HepG2 (cell line): ENCODE measurements at regions of chr10 and their contacts with region 1.

Region 1: GRCh38 chr10:3239066-3239919 is 66.7 kb upstream of the PITRM1 start:
- DNase-seq: peak; percentile 28
- ATAC-seq: peak; percentile 94
- H3K4me3 ChIP-seq: no peak overlapping the region
- H3K27ac ChIP-seq: no peak overlapping the region
- H3K4me1 ChIP-seq: no peaks in the 10 kb centered on the region
- H3K27me3 ChIP-seq: peaks cover 5 to 66% of the 10 kb centered on the region in 2 experiments
- CTCF ChIP-seq: peak; percentile 94
- EP300 ChIP-seq: no peak
- POLR2A ChIP-seq: no peak
- RAD21 ChIP-seq: peak; percentile 86

Region 2: GRCh38 chr10:3208481-3209406 is 30.5 kb before region 1 on chr10:
- CTCF ChIA-PET with region 1: no interaction called
- POLR2A ChIA-PET with region 1: no interaction called
- in situ Hi-C with region 1: no loop called
- intact Hi-C with region 1: no loop called
- DNase-seq: no peak
- ATAC-seq: no peak
- H3K4me3 ChIP-seq: no peak overlapping the region
- H3K27ac ChIP-seq: no peak overlapping the region
- H3K4me1 ChIP-seq: no peaks in the 10 kb centered on the region
- H3K27me3 ChIP-seq: peaks cover 2 to 35% of the 10 kb centered on the region in 2 experiments; a peak in 3 of 5 replicates
- CTCF ChIP-seq: no peak
- EP300 ChIP-seq: no peak
- POLR2A ChIP-seq: no peak
- RAD21 ChIP-seq: no peak

Region 3: GRCh38 chr10:3525832-3526449 is 286.6 kb after region 1 on chr10:
- CTCF ChIA-PET with region 1: no interaction called
- POLR2A ChIA-PET with region 1: no interaction called
- in situ Hi-C with region 1: no loop called
- intact Hi-C with region 1: no loop called
- DNase-seq: peak; percentile 13
- ATAC-seq: peak; percentile 50; the same call in 2 of the 3 replicates
- H3K4me3 ChIP-seq: no peak overlapping the region
- H3K27ac ChIP-seq: no peak overlapping the region
- H3K4me1 ChIP-seq: no peaks in the 10 kb centered on the region
- H3K27me3 ChIP-seq: peaks cover 0 to 22% of the 10 kb centered on the region in 2 experiments; a peak in 2 of 5 replicates
- CTCF ChIP-seq: no peak
- EP300 ChIP-seq: no peak
- POLR2A ChIP-seq: no peak
- RAD21 ChIP-seq: no peak

Region 4: DNA sequence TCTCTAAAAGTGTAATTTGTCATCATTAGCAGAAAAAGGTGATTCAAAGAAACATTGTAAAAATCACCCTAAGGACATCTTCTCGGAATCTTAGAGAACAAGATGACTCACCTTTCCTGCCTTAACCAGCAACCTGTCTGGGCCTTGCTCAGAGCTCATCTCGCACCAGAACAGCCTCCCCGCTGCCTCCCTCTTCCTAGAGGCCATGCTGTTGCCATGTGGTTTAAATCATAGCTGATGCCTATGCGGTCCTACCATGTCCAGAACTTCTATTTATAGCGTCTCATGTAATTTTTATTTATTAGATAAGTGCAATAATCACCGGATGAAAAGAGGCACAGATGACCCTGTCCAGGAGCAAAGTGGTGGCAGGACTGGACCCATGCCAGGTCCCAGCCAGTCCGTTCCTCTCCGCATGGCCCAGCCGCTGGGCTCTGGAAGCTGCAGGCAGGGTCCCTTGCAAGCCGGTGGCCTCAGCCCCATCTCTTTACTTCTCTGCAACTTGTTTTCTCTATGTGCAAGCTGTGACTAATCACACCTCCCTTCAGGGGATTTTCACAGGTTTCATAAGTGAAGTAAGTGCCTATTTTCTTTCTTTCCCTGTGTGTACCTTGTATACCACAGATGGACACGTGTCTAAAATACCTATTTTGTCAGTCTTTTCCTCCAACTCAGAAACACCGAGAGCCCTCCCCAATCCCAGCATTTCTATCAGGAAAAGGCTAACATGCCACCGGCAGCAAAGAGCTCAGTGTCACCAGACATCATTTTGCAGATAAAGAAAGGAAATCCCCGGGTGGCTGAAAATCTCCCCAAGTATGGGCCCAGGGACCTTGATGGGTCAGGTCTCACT is 518.6 kb after region 1 on chr10:
- CTCF ChIA-PET with region 1: no interaction called
- POLR2A ChIA-PET with region 1: no interaction called
- in situ Hi-C with region 1: loop called (anchors 25 kb)
- intact Hi-C with region 1: no loop called
- DNase-seq: no peak
- ATAC-seq: no peak
- H3K4me3 ChIP-seq: no peak overlapping the region
- H3K27ac ChIP-seq: no peak overlapping the region
- H3K4me1 ChIP-seq: peaks cover 65% of the 10 kb centered on the region
- H3K27me3 ChIP-seq: peaks cover 0 to 11% of the 10 kb centered on the region in 2 experiments; a peak in 2 of 5 replicates
- CTCF ChIP-seq: no peak
- EP300 ChIP-seq: no peak
- POLR2A ChIP-seq: no peak
- RAD21 ChIP-seq: no peak

Region 5: GRCh38 chr10:3776796-3777571 is 537.7 kb after region 1 on chr10:
- CTCF ChIA-PET with region 1: no interaction called
- POLR2A ChIA-PET with region 1: no interaction called
- in situ Hi-C with region 1: loop called (anchors 25 kb)
- intact Hi-C with region 1: loop called (anchors 10 kb)
- DNase-seq: peak; percentile 58
- ATAC-seq: no peak
- H3K4me3 ChIP-seq: no peak overlapping the region
- H3K27ac ChIP-seq: no peak overlapping the region
- H3K4me1 ChIP-seq: peaks cover 42% of the 10 kb centered on the region
- H3K27me3 ChIP-seq: no peaks in the 10 kb centered on the region; a peak in 1 of 5 replicates
- CTCF ChIP-seq: no peak
- EP300 ChIP-seq: peak in 1 of 2 experiments; percentile 22; a peak in 1 of 4 replicates
- POLR2A ChIP-seq: peak in 1 of 2 experiments; percentile 60; a peak in 2 of 4 replicates
- RAD21 ChIP-seq: no peak

Region 6: GRCh38 chr10:4656576-4657182 is 1417.4 kb after region 1 on chr10:
- CTCF ChIA-PET with region 1: interaction called, 9 read pairs
- POLR2A ChIA-PET with region 1: no interaction called
- in situ Hi-C with region 1: loop called (anchors 10 kb)
- intact Hi-C with region 1: loop called (anchors 5 kb)
- DNase-seq: peak; percentile 44
- ATAC-seq: no peak
- H3K4me3 ChIP-seq: no peak overlapping the region
- H3K27ac ChIP-seq: no peak overlapping the region
- H3K4me1 ChIP-seq: peaks cover 21% of the 10 kb centered on the region
- H3K27me3 ChIP-seq: peaks cover 0 to 14% of the 10 kb centered on the region in 2 experiments; a peak in 1 of 5 replicates
- CTCF ChIP-seq: peak; percentile 80
- EP300 ChIP-seq: no peak
- POLR2A ChIP-seq: no peak
- RAD21 ChIP-seq: peak; percentile 53; the same call in 1 of the 2 replicates

Region 7: GRCh38 chr10:4767033-4767814 is 1527.9 kb after region 1 on chr10:
- CTCF ChIA-PET with region 1: interaction called, 7 read pairs
- POLR2A ChIA-PET with region 1: no interaction called
- in situ Hi-C with region 1: no loop called
- intact Hi-C with region 1: loop called (anchors 1 kb)
- DNase-seq: peak; percentile 3
- ATAC-seq: no peak
- H3K4me3 ChIP-seq: no peak overlapping the region
- H3K27ac ChIP-seq: no peak overlapping the region
- H3K4me1 ChIP-seq: peaks cover 13% of the 10 kb centered on the region
- H3K27me3 ChIP-seq: 0 out of 5 replicates have a peak, but pooled peaks cover 0 to 4% of the 10 kb centered on the region in 2 experiments
- CTCF ChIP-seq: peak; percentile 56
- EP300 ChIP-seq: no peak
- POLR2A ChIP-seq: no peak
- RAD21 ChIP-seq: no peak